HepG2 (cell line): ENCODE measurements at regions of chr4 and their contacts with region 1.

Region 1: DNA sequence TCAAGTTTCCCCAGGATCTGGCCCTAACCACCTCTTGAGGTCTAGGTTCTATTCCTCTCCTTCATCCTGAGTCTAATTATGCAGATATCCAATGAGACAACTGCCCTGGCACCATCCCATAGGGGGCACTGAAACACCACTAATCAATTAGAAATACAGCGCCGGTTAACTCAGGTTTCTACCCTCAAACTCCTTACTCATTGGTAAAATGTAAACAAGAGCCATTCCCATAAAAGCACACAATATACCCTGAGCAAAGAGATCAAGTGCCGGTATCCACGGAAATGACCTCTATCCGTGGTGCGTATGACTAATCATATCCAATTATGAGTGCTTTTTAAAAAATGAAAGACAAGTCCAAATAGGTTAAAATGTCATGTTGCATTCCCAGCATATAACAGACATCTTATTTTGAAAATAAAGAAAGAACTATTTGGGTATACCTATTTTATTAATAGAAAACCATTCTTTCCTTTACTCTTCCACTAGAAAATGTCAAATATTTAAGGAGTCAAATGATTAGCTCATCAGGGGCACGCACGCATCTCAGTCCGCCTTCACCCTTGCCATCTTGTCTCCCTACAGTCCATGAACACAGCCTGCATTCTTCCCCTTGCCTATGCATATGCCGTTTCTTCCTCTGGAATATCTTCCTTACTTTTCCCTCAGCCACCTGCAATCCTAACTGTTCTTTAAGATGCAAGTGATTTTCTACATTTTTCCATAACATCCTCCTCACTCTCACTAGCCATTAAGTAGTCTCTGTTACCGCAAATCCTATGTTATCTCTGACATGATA is 141.1 kb downstream of the MAML3 start:
- DNase-seq: peak; percentile 70
- ATAC-seq: peak; percentile 97
- H3K4me3 ChIP-seq: no peak overlapping the region
- H3K27ac ChIP-seq: no peak overlapping the region
- H3K4me1 ChIP-seq: peaks cover 12% of the 10 kb centered on the region
- H3K27me3 ChIP-seq: no peaks in the 10 kb centered on the region
- CTCF ChIP-seq: peak; percentile 79
- EP300 ChIP-seq: no peak; a peak in 1 of 4 replicates
- POLR2A ChIP-seq: no peak
- RAD21 ChIP-seq: peak; percentile 77

Region 2: DNA sequence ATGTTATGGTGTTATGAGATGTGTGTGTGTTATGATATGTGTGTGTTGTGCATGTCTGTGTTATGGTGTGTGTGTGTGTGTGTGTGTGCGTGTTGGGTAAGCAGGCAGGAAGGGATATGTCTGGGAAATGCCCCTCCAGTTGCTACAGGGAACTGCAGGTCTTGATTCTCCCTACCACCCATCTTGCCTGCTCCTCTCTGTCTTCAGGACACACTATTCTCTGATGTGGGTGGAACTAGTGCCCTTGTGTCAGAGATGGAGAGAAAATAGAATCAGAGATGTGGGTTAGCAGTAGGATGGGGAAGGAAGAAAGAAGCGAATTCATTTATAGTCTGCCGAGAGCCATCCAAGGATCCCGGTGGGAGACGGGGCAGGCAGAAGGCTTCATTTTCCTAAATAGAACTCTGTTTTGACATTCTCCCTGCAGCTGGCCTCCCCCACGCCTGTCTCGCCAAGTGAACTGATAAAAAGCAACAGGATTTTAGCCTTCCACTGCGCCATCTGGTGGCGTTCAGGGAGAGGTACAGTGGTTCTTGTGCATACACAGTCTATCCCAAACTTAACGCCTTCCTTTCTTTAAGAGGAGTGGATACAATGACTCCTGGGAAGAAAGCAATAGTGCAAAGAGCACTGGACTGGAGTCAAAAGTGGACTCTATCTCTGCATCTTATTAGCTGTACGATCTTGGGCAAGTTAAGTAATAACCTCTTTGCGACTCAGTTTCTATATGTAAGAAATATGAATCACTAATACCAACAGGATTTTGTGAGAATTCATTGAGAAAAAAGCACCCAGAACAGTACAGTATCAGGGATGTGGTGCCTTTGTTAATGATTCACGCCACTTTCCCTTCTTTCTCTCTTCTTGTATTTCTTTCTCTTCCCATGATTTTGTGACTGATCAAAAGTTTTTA is 361.3 kb before region 1 on chr4:
- CTCF ChIA-PET with region 1: no interaction called
- POLR2A ChIA-PET with region 1: no interaction called
- in situ Hi-C with region 1: no loop called
- intact Hi-C with region 1: no loop called
- DNase-seq: peak; percentile 56
- ATAC-seq: peak; percentile 77
- H3K4me3 ChIP-seq: no peak overlapping the region
- H3K27ac ChIP-seq: no peak overlapping the region
- H3K4me1 ChIP-seq: peaks cover 29% of the 10 kb centered on the region
- H3K27me3 ChIP-seq: no peaks in the 10 kb centered on the region
- CTCF ChIP-seq: peak; percentile 88
- EP300 ChIP-seq: no peak; a peak in 1 of 4 replicates
- POLR2A ChIP-seq: no peak
- RAD21 ChIP-seq: peak; percentile 54; the same call in 1 of the 2 replicates

Region 3: GRCh38 chr4:139815778-139816601 is 196.9 kb before region 1 on chr4:
- CTCF ChIA-PET with region 1: no interaction called
- POLR2A ChIA-PET with region 1: no interaction called
- in situ Hi-C with region 1: no loop called
- intact Hi-C with region 1: no loop called
- DNase-seq: no peak
- ATAC-seq: no peak
- H3K4me3 ChIP-seq: no peak overlapping the region
- H3K27ac ChIP-seq: no peak overlapping the region
- H3K4me1 ChIP-seq: peaks cover 7% of the 10 kb centered on the region; the same call in 1 of the 2 replicates
- H3K27me3 ChIP-seq: peaks cover 3 to 38% of the 10 kb centered on the region in 2 experiments; a peak in 4 of 5 replicates
- CTCF ChIP-seq: no peak
- EP300 ChIP-seq: no peak
- POLR2A ChIP-seq: no peak
- RAD21 ChIP-seq: no peak

Region 4: DNA sequence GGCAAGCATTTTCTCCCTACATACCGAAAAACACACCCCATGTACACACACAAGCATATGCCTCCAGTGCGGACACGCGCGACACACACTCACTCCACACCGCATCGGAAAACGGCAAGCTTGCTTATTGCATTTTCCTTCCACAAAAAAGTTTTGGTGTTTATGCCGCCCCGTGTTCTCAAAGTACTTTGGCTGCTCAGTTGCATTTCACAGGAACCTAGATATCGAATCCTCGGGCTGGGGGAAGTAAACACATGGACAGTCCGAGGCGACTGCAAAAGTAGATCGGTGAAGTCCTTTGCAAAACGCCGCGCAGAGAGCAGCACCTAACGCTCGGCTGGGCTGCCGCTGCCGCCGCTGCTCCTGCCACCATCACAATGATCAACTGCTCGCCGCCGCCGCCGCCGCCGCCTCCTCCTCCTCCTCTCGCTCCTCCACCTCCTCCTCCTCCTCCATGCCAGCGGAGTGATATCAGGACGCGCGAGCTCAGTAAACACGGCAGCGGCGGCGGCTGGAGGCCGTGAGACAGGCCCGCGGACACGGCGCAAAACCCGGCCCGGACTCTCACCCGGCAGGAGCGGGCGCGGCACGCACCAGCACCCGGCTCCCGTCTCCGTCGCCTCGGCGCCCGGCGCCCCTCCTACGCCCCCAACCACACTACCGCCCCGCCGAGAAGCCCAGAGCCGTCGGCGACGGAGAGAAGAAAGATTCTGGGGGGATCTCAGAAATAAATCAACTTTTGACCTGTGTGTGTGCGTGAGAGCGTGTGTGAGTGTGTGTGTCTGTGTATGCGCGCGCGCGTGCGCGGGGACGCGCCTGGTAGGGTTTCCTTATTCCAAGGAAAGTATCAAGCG is 141.1 kb after region 1 on chr4 and contains the start of gene MAML3:
- CTCF ChIA-PET with region 1: no interaction called
- POLR2A ChIA-PET with region 1: no interaction called
- in situ Hi-C with region 1: loop called (anchors 5 kb)
- intact Hi-C with region 1: loop called (anchors 2 kb)
- DNase-seq: peak; percentile 64
- ATAC-seq: peak; percentile 83
- H3K4me3 ChIP-seq: peak within 1 kb of the TSS; percentile 55 to 75 (median 65)
- H3K27ac ChIP-seq: no peak within 1 kb of the TSS
- H3K4me1 ChIP-seq: peaks cover 42% of the 10 kb centered on the region
- H3K27me3 ChIP-seq: peaks cover 3 to 48% of the 10 kb centered on the region in 2 experiments
- CTCF ChIP-seq: no peak
- EP300 ChIP-seq: no peak
- POLR2A ChIP-seq: no peak
- RAD21 ChIP-seq: 0 out of 2 replicates have a peak, but pooled peaks have one; percentile 33
- total RNA-seq, gene MAML3: 0.13 TPM in 1 of 2 replicates, not detected in the other

Region 5: DNA sequence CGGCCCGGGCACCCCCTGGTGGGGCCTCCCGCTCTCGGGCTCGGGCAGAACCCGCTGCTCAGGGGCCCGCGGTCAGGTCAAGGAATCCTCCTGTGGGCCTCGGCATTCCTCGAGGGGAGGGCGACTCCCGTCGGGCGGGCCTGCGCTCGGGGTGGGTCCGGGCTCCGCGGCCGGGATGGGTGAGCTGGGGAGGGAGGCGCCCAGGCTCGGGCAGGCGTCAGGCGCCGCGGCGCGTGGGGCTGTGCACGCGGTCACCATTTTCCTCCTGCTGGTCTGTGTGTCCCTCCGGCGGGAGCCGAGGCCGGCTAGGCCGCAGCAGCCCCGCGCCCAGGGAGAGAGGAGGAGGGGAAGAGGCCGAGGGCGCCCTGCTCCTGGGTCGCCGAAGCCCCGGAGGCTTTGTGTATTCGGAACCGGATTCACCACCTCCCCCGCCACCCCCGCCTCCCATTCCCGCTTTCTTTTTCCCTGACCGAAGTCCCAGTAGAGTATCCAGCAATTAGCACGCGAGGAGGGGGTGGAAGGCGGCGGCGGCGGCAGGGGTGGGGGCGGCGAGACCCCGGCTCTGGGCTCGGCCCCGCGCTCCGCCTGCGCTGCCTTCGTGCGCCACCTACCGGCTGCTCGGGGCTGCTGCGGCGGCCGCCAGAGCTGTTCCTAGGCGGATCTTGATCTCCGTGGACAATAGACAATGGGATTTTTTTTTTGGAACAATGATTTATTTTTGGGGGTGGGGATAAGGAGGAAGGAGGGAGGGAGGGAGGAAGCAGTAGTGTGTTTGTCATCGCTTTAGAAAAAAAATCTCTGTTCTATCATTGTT is 240.1 kb after region 1 on chr4:
- CTCF ChIA-PET with region 1: interaction called, 18 read pairs
- POLR2A ChIA-PET with region 1: no interaction called
- in situ Hi-C with region 1: loop called (anchors 5 kb)
- intact Hi-C with region 1: loop called (anchors 1 kb)
- DNase-seq: no peak
- ATAC-seq: peak; percentile 90
- H3K4me3 ChIP-seq: peak overlapping the region; percentile 38 to 67 (median 50); a peak in 5 of 6 replicates
- H3K27ac ChIP-seq: no peak overlapping the region
- H3K4me1 ChIP-seq: peaks cover 43% of the 10 kb centered on the region
- H3K27me3 ChIP-seq: peaks cover 2 to 8% of the 10 kb centered on the region in 2 experiments; a peak in 2 of 5 replicates
- CTCF ChIP-seq: peak; percentile 76
- EP300 ChIP-seq: no peak
- POLR2A ChIP-seq: no peak
- RAD21 ChIP-seq: peak; percentile 66

Region 6: GRCh38 chr4:140326395-140326993 is 313.6 kb after region 1 on chr4:
- CTCF ChIA-PET with region 1: interaction called, 10 read pairs
- POLR2A ChIA-PET with region 1: no interaction called
- in situ Hi-C with region 1: loop called (anchors 10 kb)
- intact Hi-C with region 1: loop called (anchors 1 kb)
- DNase-seq: peak; percentile 15
- ATAC-seq: peak; percentile 92
- H3K4me3 ChIP-seq: no peak overlapping the region
- H3K27ac ChIP-seq: no peak overlapping the region
- H3K4me1 ChIP-seq: no peaks in the 10 kb centered on the region
- H3K27me3 ChIP-seq: no peaks in the 10 kb centered on the region
- CTCF ChIP-seq: peak; percentile 56
- EP300 ChIP-seq: no peak
- POLR2A ChIP-seq: no peak
- RAD21 ChIP-seq: no peak

Region 7: DNA sequence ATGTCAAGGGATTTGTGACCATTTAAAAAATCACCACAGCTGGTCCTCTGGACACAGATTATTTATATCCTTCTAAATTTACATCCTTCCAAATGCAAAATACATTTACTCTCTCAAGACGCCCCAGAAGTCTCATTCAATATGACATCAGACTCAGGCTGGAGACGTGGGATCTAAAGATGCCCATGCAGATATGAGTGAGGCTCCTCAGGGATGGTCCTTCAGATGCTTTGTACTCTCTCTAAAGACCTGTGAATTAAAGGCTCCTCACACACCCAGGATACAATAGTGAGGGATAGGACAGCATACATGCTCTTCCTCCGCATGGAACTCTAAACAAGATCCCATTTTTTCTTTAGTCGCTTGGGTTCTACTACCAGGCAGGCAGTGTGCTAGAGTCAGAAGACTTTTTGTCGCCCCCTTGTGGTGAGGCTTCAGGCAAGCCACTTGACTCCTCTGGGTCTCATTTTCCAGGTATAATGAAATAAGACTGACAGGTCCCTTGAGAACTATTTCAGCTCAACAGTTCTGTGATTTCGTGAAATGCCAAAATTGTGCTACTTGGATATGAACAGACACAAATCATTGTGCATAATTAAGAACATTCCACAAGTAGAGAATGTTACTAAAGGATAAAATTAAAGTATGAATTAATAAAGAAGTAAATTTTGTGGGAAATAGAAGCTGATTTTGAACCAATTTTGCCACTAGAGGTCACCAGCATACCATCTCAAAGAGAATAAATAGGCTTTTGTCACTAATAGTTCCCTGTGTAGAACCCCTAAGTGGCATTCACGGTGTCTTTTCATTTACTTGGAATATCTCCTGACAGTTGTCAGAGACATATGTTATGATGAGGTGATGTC is 346.9 kb after region 1 on chr4:
- CTCF ChIA-PET with region 1: interaction called, 15 read pairs
- POLR2A ChIA-PET with region 1: no interaction called
- in situ Hi-C with region 1: no loop called
- intact Hi-C with region 1: loop called (anchors 1 kb)
- DNase-seq: peak; percentile 78
- ATAC-seq: peak; percentile 95
- H3K4me3 ChIP-seq: no peak overlapping the region
- H3K27ac ChIP-seq: no peak overlapping the region
- H3K4me1 ChIP-seq: peaks cover 28% of the 10 kb centered on the region
- H3K27me3 ChIP-seq: no peaks in the 10 kb centered on the region
- CTCF ChIP-seq: peak; percentile 71
- EP300 ChIP-seq: no peak
- POLR2A ChIP-seq: no peak
- RAD21 ChIP-seq: 0 out of 2 replicates have a peak, but pooled peaks have one; percentile 16

Region 8: DNA sequence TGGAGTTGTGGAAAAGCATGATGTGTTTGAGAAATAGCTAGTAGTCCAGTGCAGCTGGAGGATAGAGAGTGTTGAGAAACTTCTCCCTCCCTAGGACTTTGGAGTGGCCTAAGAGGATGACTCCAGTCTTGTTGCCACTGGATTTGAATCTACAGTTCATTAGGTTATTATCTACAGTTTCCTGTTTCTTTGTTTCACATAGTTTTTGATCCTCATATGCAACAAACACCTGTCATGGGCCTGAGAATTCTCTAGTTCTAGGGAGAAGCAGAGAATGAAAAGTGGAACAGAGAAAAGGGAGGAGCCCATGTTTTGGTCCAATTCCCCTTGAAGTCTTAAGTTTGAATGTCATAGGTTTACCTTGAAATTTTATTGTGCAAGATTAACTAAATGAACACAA is 816.9 kb after region 1 on chr4:
- CTCF ChIA-PET with region 1: no interaction called
- POLR2A ChIA-PET with region 1: no interaction called
- in situ Hi-C with region 1: loop called (anchors 25 kb)
- intact Hi-C with region 1: no loop called
- DNase-seq: no peak
- ATAC-seq: no peak
- H3K4me3 ChIP-seq: no peak overlapping the region
- H3K27ac ChIP-seq: no peak overlapping the region
- H3K4me1 ChIP-seq: 0 out of 2 replicates have a peak, but pooled peaks cover 4% of the 10 kb centered on the region
- H3K27me3 ChIP-seq: no peaks in the 10 kb centered on the region
- CTCF ChIP-seq: no peak
- EP300 ChIP-seq: no peak
- POLR2A ChIP-seq: no peak
- RAD21 ChIP-seq: no peak